PC-3 (cell line): ENCODE measurements at regions of chr9 and their contacts with region 1.

Region 1: GRCh38 chr9:33676746-33677505 is 118.4 kb upstream of the PRSS3 start:
- DNase-seq: peak; percentile 25
- ATAC-seq: peak; percentile 76
- H3K4me3 ChIP-seq: peak overlapping the region; percentile 74
- H3K27ac ChIP-seq: no peak overlapping the region
- H3K4me1 ChIP-seq: no peaks in the 10 kb centered on the region
- H3K27me3 ChIP-seq: no peaks in the 10 kb centered on the region
- CTCF ChIP-seq: no peak

Region 2: DNA sequence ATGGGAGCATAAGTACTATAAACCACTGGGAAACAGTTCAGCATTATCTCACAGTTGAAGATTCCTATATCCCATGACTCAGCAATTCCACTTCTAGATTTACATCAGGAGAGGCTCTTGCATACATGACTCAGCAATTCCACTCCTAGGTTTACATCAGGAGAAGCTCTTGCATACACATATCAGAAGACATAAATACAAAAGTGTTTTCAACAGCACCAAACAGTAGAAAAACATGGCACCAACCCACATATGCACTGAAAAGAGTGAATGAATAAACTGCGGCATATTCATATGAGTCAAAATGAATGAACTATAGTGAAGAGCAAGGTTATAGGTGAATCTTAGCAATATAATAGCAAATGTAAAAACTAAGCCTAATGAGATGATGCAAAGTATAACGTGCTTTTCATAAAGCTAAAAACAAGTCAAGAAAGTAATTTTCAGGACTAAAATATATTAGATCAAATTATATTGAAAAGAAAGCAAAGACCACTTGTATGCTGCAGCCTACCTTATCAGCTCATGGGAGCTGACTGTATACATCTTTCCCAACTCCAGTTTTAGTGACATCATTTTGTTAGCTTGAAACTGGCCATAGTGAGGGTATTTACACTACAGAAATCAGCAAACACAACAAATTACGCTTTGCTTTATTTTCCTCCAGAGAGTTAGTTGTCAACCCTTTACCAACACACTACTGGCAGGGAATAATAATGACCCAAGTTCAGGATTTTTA is 57.1 kb before region 1 on chr9:
- CTCF ChIA-PET with region 1: no interaction called
- POLR2A ChIA-PET with region 1: no interaction called
- intact Hi-C with region 1: no loop called
- DNase-seq: peak; percentile 72
- ATAC-seq: peak; percentile 25; the same call in 1 of the 2 replicates
- H3K4me3 ChIP-seq: no peak overlapping the region
- H3K27ac ChIP-seq: peak overlapping the region; percentile 14; the same call in 1 of the 2 replicates
- H3K4me1 ChIP-seq: peaks cover 24% of the 10 kb centered on the region
- H3K27me3 ChIP-seq: no peaks in the 10 kb centered on the region
- CTCF ChIP-seq: no peak

Region 3: DNA sequence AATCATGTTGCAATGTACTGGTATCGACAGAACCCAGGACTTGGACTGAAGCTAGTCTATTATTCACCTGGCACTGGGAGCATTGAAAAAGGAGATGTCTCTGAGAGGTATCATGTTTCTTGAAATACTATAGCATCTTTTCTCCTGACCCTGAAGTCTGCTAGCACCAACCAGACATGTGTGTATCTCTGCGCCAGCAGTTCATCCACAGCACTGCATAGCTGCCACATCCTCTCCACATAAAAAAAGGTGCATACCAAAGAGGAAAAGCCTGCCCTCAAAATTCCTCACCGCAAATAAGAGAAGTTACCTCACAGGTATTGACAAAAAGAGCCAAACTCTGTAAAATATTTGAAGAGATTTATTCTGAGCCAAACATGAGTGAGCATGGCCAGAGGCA is 18.9 kb after region 1 on chr9:
- CTCF ChIA-PET with region 1: no interaction called
- POLR2A ChIA-PET with region 1: interaction called, 12 read pairs
- intact Hi-C with region 1: no loop called
- DNase-seq: no peak
- ATAC-seq: no peak
- H3K4me3 ChIP-seq: no peak overlapping the region
- H3K27ac ChIP-seq: no peak overlapping the region
- H3K4me1 ChIP-seq: peaks cover 6% of the 10 kb centered on the region
- H3K27me3 ChIP-seq: no peaks in the 10 kb centered on the region
- CTCF ChIP-seq: no peak